ENCODE measurements at regions of chr11 and their contacts with region 1.

Region 1: GRCh38 chr11:16605894-16606783 is 132.3 kb upstream of the C11orf58 start:
- DNase-seq: peak; percentile 90 to 92
- ATAC-seq: peak; percentile 52 to 54
- H3K4me3 ChIP-seq: peak overlapping the region; percentile 70 to 98 (median 94)
- H3K27ac ChIP-seq: peak overlapping the region; percentile 91 to 99 (median 96)
- H3K4me1 ChIP-seq: peaks cover 14 to 33% of the 10 kb centered on the region in 2 donors
- H3K27me3 ChIP-seq: peaks cover 0 to 3% (median 0%) of the 10 kb centered on the region in 3 donors
- CTCF ChIP-seq: peak; percentile 96 to 98 (median 97)
- POLR2A ChIP-seq: peak; percentile 81 to 89

Region 2: GRCh38 chr11:15941201-15941770 is 664.9 kb before region 1 on chr11:
- in situ Hi-C with region 1: loop called in 2 of 4 experiments (anchors 10 to 25 kb)
- intact Hi-C with region 1: no loop called
- DNase-seq: peak in 1 of 2 donors; percentile 33
- ATAC-seq: peak; percentile 68 to 80
- H3K4me3 ChIP-seq: peak overlapping the region in 3 of 4 donors; percentile 9 to 45 (median 44)
- H3K27ac ChIP-seq: no peak overlapping the region
- H3K4me1 ChIP-seq: peaks cover 0 to 5% of the 10 kb centered on the region in 2 donors
- H3K27me3 ChIP-seq: no peaks in the 10 kb centered on the region
- CTCF ChIP-seq: peak; percentile 86 to 96 (median 95)
- POLR2A ChIP-seq: no peak

Region 3: DNA sequence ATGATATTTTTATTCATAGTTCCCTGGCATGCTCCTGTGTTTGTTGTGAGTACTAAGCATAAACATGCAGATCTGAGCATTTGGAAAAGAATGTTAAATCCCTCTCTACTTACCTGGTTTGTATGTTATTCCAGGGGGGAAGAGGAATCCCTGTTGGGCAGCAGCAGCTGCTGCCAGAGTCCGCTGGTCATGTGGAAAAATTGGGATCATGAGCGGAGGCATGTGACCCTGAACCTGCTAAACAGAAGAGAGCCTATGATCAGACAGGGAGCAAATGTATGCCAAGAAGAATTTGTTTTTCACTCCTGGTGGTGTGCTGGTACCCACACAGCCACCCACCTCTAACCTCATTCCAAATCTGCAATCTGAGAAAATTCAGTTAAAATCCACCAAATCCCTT is 494.4 kb before region 1 on chr11:
- in situ Hi-C with region 1: loop called in 1 of 4 experiments (anchors 25 kb)
- intact Hi-C with region 1: loop called (anchors 5 kb)
- DNase-seq: peak in 1 of 2 donors; percentile 20
- ATAC-seq: no peak
- H3K4me3 ChIP-seq: no peak overlapping the region
- H3K27ac ChIP-seq: peak overlapping the region in 2 of 4 donors; percentile 15 to 17
- H3K4me1 ChIP-seq: peaks cover 47 to 53% of the 10 kb centered on the region in 2 donors
- H3K27me3 ChIP-seq: no peaks in the 10 kb centered on the region
- CTCF ChIP-seq: no peak
- POLR2A ChIP-seq: no peak

Region 4: DNA sequence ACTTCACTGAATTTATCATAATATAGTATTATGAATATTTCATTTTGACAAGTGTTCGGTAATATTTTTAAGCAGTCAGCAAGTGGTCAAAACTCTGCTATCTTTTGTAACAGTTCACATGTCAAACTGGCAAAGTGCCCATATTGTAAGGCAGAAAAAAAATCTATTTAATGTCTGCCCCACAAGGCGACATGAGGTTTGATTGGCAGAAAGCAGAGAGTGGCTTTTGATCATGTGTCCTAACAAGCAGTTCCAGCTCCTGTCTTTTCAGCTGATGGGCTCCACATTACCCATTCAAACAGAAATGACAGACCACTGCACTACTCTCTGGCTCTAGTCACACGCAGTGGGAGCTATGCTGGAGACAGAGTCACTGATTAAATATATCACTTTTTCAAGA is 308.8 kb before region 1 on chr11:
- in situ Hi-C with region 1: no loop called
- intact Hi-C with region 1: loop called (anchors 5 kb)
- DNase-seq: peak; percentile 3 to 26
- ATAC-seq: peak; percentile 38 to 53
- H3K4me3 ChIP-seq: no peak overlapping the region
- H3K27ac ChIP-seq: peak overlapping the region; percentile 8 to 87 (median 61)
- H3K4me1 ChIP-seq: peaks cover 54 to 67% of the 10 kb centered on the region in 2 donors
- H3K27me3 ChIP-seq: no peaks in the 10 kb centered on the region
- CTCF ChIP-seq: no peak
- POLR2A ChIP-seq: no peak

Region 5: DNA sequence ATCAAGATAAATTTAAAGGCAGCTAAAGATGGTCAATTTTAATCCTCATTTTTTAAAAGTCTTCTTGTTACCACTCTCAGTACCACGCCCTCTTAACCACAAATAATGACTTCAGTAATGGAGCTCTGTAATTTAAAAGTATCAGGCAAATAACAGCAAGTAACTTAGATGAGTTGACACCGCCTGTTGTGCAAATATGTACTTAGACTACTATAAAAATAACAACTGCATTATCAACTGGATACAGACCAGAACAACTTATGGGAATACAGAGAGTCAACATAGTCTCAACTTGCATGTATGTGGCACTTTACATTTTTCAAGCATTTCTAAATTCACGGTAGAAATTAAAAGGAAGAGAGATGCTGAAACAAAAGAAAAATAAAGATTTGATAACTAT is 118.4 kb before region 1 on chr11:
- in situ Hi-C with region 1: no loop called
- intact Hi-C with region 1: no loop called
- DNase-seq: no peak
- ATAC-seq: no peak
- H3K4me3 ChIP-seq: no peak overlapping the region
- H3K27ac ChIP-seq: no peak overlapping the region
- H3K4me1 ChIP-seq: peaks cover 23 to 26% of the 10 kb centered on the region in 2 donors
- H3K27me3 ChIP-seq: no peaks in the 10 kb centered on the region
- CTCF ChIP-seq: no peak
- POLR2A ChIP-seq: no peak

Region 6: DNA sequence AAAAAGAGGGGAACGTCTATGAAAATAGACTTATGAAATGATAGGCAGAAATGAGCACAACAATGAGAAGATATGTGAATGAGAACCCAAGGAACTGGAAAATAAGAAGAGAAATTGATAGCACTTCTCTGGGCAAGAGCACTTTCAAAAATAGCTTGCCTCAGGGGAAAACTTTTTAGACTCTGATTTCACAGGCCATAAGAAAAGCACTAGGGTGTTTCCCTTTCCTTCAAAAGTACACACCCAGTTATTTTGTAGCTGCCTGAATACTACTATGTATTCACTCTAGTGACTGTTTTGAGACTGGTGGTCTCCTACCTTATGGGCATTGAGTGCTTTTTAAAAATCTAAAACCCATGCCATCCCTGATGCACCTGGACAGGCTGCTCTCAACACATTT is 77.5 kb before region 1 on chr11:
- in situ Hi-C with region 1: no loop called
- intact Hi-C with region 1: loop called (anchors 2 kb)
- DNase-seq: no peak
- ATAC-seq: peak; percentile 37 to 42
- H3K4me3 ChIP-seq: peak overlapping the region in 1 of 4 donors; percentile 27
- H3K27ac ChIP-seq: peak overlapping the region; percentile 73 to 82 (median 79)
- H3K4me1 ChIP-seq: peaks cover 52% of the 10 kb centered on the region in 2 donors
- H3K27me3 ChIP-seq: no peaks in the 10 kb centered on the region
- CTCF ChIP-seq: no peak
- POLR2A ChIP-seq: no peak

Region 7: GRCh38 chr11:16561150-16561549 is 45.0 kb before region 1 on chr11:
- in situ Hi-C with region 1: no loop called
- intact Hi-C with region 1: no loop called
- DNase-seq: no peak
- ATAC-seq: no peak
- H3K4me3 ChIP-seq: no peak overlapping the region
- H3K27ac ChIP-seq: no peak overlapping the region
- H3K4me1 ChIP-seq: peaks cover 40 to 47% of the 10 kb centered on the region in 2 donors
- H3K27me3 ChIP-seq: no peaks in the 10 kb centered on the region
- CTCF ChIP-seq: no peak
- POLR2A ChIP-seq: no peak

Region 8: DNA sequence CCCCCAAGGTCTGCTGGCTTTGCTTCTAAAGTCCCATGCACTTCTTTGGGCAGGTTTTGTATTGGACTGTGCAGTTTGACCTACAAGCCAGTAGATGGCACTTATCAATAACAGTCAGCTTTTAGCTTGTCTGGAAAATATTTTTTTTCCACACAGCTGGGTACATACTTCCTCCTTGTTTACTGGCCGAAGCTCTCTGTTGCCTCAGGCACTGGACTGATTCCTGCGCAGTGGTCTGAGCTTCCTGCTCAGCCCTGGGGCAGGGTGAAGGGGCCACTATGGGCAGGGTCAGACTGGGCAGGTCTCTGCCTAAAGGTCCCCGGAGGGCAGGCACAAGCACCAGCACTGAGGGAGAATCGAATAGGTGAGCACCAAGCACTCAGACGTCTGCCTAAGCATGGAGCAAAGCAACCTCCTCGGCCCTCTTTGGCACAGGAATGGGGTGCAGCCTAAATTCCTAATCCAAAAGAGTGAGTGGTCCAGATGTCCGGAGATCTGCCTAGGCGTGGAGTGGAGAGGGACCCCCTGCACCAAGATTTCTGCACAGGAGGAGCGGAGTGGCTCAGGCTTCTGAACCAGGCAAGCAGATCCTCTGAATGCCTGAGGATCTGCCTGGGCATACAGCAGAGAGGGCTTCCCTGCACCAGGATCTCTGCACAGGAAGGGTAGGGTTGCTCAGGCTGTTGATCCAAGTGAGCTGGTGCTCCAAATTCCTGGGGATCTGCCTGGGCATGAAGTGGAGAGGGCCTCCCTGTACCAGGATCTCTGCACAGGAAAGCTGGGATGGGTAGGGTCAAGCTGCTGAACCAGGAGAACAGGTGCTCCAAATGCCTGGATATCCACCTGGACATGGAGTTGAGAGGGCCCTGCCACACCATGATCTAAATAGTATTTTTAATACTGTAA is 26.4 kb after region 1 on chr11:
- in situ Hi-C with region 1: no loop called
- intact Hi-C with region 1: no loop called
- DNase-seq: no peak
- ATAC-seq: no peak
- H3K4me3 ChIP-seq: no peak overlapping the region
- H3K27ac ChIP-seq: no peak overlapping the region
- H3K4me1 ChIP-seq: no peaks in the 10 kb centered on the region
- H3K27me3 ChIP-seq: peaks cover 0 to 2% (median 0%) of the 10 kb centered on the region in 3 donors
- CTCF ChIP-seq: no peak
- POLR2A ChIP-seq: no peak

Measured in gastrocnemius medialis (tissue), 4 donors.